Activated T-helper 2 cell treated with anti-CD3 and anti-CD28 coated beads, Interferon-gamma antibody, Interleukin-2, Interleukin-4, amounts not matched to agents 10 μg/mL and 5 μg/mL and 100 μg/mL, durations not matched to agents 14 hours and 24 hours and 36 hours (primary cell): ENCODE measurements at regions of chr14 and their contacts with region 1.

Region 1: DNA sequence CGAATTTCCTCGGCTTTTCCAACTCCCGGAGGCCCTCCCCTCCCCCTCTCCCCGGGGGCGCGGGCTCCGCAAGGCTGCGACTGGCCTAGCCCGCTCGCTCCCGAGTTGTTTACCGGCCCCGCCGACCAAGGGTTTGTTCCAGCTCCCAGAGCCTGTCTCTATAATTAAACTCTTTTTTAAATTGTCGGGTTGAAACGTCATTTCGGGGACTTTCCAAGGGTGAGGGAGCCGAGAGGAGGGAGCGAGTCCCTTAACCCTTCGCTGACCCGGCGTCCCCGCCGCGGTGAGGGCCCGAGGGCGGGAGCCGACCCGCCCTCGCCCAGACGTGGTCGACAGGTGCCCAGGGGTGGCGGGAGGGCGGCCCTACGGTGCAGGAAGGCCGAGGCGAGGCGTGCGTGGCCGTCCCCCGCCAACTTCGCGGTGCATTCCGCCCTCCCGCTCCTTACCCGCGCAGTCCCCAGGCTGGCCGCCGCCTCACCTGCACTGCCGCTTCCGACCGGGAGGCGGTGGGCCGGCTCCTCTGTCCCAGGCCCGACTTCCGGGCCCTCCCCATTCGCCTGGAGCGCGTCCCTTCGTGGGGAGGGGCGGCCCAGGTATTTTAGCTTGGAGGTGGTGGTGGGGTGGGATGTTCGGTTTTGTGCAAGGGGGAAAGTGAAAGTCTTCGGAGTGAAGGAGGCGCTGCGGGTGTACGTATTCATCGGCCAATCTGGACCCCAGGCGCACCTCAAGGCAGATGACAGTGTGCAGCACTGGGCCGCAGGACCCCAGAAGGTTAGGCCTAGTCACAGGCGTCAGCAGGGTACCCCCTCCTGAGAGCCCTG is 2.9 kb upstream of the ZFP36L1 start:
- DNase-seq: peak; percentile 78
- H3K4me3 Mint-ChIP-seq: peak overlapping the region; percentile 84
- H3K27ac Mint-ChIP-seq: peak overlapping the region; percentile 99
- H3K4me1 Mint-ChIP-seq: peaks cover 34% of the 10 kb centered on the region
- H3K27me3 Mint-ChIP-seq: no peaks in the 10 kb centered on the region

Region 2: GRCh38 chr14:68210729-68211299 is 585.0 kb before region 1 on chr14:
- intact Hi-C with region 1: loop called (anchors 1 kb)
- DNase-seq: peak; percentile 54
- H3K4me3 Mint-ChIP-seq: peak overlapping the region; percentile 61
- H3K27ac Mint-ChIP-seq: peak overlapping the region; percentile 62
- H3K4me1 Mint-ChIP-seq: peaks cover 36% of the 10 kb centered on the region
- H3K27me3 Mint-ChIP-seq: no peaks in the 10 kb centered on the region

Region 3: DNA sequence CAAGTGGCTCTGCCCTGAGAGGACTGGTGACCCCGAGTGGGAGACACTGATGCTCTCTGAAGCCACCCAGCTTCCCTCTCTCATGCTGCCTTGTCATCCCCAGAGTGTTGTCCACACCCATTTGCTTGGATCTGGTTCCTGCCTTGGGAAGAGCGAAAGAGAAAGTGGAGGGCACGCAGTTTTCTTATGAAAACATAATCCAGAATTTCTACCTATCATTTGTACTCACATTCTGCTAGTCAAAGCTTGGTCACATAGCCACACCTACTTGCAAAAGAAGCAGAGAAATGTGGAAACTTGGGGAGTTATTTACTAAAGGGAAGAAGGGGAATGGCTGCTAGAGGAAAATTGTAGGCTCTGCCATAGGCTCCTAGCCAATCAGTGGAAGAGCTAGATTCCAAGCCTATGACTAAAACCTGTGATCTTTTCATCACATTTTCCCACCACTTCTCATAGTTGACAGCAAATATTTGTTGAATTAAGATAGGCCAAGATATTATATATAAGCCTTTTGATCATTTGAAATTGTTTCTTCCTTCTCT is 329.2 kb before region 1 on chr14:
- intact Hi-C with region 1: loop called (anchors 5 kb)
- DNase-seq: no peak
- H3K4me3 Mint-ChIP-seq: no peak overlapping the region
- H3K27ac Mint-ChIP-seq: no peak overlapping the region
- H3K4me1 Mint-ChIP-seq: peaks cover 39% of the 10 kb centered on the region
- H3K27me3 Mint-ChIP-seq: no peaks in the 10 kb centered on the region

Region 4: DNA sequence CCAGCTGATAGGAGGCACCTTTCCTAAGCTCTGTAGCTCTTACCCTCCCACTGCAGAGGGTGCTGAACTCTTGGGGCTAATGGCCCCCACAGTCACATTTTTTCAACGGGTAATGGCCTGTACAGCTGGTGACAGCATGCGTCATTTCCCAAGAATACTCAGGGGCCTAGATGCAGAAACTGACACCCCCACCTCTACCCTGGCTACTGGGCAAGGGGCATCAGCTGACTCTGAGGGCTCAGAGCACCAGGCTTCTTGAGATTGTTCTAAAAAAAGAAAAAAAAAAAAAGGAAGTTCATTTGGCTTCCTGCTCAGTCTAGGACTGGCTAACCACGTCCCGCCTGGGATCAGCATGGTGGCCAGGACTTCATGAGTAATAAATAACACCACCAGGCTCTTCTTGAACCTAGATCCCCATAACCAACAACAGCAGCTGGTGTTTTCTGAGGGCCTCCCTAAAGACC is 38.2 kb before region 1 on chr14:
- intact Hi-C with region 1: no loop called
- DNase-seq: no peak
- H3K4me3 Mint-ChIP-seq: no peak overlapping the region
- H3K27ac Mint-ChIP-seq: no peak overlapping the region
- H3K4me1 Mint-ChIP-seq: peaks cover 11% of the 10 kb centered on the region
- H3K27me3 Mint-ChIP-seq: no peaks in the 10 kb centered on the region

Region 5: DNA sequence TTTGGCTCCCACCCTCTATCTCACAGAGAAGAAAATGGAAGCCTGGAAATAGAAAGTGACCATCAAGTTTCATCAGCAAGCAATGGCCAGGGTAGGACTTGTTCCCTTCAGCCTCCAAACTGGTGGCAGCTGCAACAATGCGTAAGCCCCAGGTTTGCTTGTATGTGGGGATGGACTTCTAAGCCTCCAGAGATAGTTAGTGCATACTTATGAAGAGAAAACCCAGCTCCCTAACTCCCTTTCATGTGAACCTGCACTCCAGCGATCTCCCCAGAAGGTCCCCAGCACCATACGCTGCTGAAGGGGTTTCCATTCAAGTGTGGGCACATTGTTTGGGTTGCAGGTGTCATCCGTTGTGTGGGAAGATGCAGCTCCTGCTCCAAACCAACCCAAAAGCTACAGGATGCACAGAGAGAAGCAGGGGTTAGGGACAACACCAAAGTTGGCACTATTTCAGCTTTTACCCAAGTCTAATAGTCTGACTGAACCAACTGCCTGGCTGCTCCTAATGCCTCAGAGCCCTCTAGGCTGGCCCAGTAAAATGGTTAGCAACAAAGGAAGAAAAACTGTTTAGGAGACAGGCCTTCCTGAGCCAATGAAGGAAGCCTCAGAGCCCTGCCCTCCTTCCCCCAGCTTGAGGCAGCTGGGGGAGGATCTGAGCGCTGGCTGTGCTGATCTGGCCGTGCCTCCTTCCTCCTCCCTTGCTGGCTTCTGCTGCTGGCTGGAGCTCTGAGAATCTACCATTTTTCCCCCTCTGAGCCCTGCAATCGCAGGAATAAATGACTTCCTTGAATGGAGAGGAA is 15.2 kb before region 1 on chr14:
- intact Hi-C with region 1: loop called (anchors 1 kb)
- DNase-seq: no peak
- H3K4me3 Mint-ChIP-seq: peak overlapping the region; percentile 67
- H3K27ac Mint-ChIP-seq: peak overlapping the region; percentile 92
- H3K4me1 Mint-ChIP-seq: peaks cover 63% of the 10 kb centered on the region
- H3K27me3 Mint-ChIP-seq: no peaks in the 10 kb centered on the region